ENCODE measurements at regions of chr15 and their contacts with region 1.

Region 1: DNA sequence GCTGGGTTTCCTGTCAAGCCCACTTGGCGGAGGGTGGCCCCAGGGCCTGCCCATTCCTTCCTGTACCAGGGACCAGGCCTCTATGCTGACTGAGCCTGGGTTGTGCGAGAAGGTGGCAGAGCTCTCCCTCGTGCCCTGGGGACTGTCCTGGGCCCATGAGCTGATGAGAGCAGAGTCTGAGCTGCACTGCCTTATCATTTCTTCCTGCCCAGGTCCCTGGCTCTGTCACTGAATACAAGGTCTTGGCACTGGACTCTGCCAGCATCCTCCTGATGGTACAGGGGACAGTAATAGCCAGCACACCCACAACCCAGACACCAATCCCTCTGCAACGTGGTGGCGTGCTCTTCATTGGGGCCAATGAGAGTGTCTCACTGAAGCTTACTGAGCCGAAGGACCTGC is 7.5 kb downstream of the MPI start:
- DNase-seq: no peak

Region 2: DNA sequence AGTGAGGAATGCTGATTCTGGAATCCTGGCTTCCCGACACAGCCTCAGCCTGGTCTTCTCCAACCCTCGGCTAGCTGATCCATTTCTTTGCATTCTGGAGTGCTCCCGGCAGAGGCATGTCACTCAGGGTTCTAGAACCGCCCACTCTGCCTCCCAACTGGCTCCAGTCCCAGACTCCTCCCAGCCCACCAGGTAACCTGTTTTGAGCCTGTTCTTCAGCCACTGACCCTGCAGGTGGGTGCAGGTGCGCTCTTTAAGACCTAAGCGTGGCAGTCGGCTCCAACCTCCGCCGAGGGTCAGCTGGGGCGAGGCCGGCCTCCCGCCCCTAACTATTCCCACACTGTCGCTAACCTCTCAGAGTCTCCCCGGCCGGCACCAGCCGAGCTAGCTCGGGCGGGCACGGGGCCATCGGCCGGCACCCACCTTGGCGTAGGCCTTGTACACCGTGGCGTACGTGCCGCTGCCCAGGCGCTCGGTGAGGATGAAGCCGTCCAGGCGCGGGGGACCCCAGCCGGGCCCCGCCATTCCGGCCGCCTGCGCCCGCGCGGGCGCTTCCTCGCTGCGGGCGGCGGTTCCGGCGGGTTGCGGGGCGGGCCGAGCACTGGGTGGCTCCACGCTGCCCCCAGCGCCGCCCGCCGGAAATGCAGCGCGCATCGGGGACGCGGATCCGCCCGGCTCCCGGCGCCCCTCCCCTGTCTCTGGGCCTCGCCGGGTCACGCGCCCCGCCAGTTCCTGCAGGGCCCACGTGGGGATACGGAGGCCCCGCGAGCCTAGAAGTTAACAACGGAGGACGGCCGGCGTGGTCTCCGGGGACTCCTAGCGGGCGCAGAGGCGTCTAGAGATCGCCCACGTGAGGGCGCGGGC is 54.5 kb before region 1 on chr15 and contains the start of gene ULK3:
- intact Hi-C with region 1: loop called in 1 of 2 experiments (anchors 5 kb)
- DNase-seq: peak; percentile 97
- total RNA-seq, gene ULK3: 19.1 to 21.8 TPM

Region 3: DNA sequence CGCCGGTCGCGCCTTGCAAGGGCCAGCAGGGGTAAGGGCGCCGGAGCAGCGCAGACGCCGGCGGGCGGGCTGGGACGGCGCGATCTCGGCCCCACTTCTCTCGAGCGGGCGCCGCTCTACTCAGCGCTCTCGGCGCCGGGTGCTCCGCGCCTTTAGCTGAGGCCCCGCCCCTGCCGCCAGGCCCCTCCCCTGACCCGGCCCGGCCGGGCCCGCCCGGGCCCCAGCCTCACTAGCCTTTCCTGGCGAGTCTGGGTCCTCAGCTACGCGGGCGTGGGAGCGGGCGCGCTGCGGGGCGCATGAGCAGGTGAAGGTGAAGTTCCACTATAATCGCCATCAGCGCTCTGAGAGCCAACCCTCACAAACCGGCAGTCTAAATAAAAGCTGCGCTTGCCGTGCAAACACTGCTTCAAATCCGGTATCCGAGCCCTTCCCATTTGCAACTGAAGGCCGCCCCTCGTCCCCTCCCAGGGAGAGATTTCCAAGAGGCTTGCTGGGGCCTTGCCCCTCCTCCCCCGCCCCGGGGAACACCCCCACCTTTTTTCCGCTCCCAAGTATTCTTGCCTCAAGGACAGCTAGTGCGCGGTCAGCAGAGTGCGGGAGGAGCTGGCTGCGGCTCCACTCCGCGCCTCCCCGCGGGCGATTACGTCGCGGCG is 59.5 kb after region 1 on chr15 and contains the start of gene RPP25:
- intact Hi-C with region 1: no loop called
- DNase-seq: peak; percentile 93
- total RNA-seq, gene RPP25: 7.5 to 9.3 TPM

Measured in posterior vena cava (tissue), 2 donors.